ENCODE measurements at regions of chr9 and their contacts with region 1.

Region 1: DNA sequence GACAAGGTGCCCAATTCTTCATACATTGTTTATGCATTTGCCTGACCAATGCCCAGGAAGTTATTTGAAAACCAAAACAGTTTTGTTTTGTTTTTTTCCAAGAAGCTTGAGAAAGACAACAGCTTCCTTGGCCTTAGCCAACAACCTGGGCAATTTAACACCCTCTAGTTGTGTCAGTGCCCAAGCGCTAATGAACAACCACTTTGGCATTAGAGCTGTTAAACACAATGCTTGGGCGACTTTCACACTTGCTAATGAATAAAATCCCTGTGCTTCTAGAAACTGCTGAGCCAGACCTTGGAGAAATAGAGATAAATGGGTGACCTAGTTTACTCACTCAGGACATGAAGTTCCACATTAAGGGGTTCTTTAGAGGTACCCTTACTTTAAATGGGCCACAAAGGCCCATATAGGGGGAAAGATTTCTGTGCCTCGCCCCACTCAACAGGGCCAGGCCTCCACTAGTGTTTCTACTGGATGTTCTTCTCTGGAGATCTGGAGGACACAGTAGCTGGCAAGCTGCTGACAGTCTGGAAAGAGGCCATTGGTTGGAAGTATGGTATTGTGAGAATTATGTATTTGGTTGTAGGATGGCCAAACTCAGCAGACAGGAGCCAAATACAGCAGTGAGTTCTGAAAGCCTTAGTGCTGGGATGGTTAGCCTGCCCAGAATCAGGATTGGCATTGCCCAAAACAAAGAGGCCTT is 179.8 kb downstream of the DOCK8 start:
- DNase-seq: no peak
- ATAC-seq: no peak
- H3K4me3 ChIP-seq: no peak overlapping the region
- H3K4me3 Mint-ChIP-seq: no peak overlapping the region
- H3K27ac ChIP-seq: no peak overlapping the region
- H3K27ac Mint-ChIP-seq: peak overlapping the region in 8 of 9 donors; percentile 18 to 77 (median 60)
- H3K4me1 ChIP-seq: no peaks in the 10 kb centered on the region
- H3K4me1 Mint-ChIP-seq: peaks cover 0 to 7% (median 0%) of the 10 kb centered on the region in 7 donors
- H3K27me3 ChIP-seq: no peaks in the 10 kb centered on the region
- H3K27me3 Mint-ChIP-seq: no peaks in the 10 kb centered on the region

Region 2: GRCh38 chr9:362936-363335 is 31.6 kb before region 1 on chr9:
- CTCF ChIA-PET with region 1: no interaction called
- POLR2A ChIA-PET with region 1: no interaction called
- intact Hi-C with region 1: loop called in 1 of 2 experiments (anchors 5 kb)
- DNase-seq: no peak
- ATAC-seq: no peak
- H3K4me3 ChIP-seq: no peak overlapping the region
- H3K4me3 Mint-ChIP-seq: no peak overlapping the region
- H3K27ac ChIP-seq: no peak overlapping the region
- H3K27ac Mint-ChIP-seq: peak overlapping the region in 3 of 9 donors; percentile 67 to 88 (median 79)
- H3K4me1 ChIP-seq: no peaks in the 10 kb centered on the region
- H3K4me1 Mint-ChIP-seq: peaks cover 0 to 13% (median 4%) of the 10 kb centered on the region in 7 donors
- H3K27me3 ChIP-seq: no peaks in the 10 kb centered on the region
- H3K27me3 Mint-ChIP-seq: no peaks in the 10 kb centered on the region

Region 3: GRCh38 chr9:453832-454231 is 59.3 kb after region 1 on chr9:
- CTCF ChIA-PET with region 1: no interaction called
- POLR2A ChIA-PET with region 1: no interaction called
- intact Hi-C with region 1: no loop called
- DNase-seq: no peak
- ATAC-seq: no peak
- H3K4me3 ChIP-seq: no peak overlapping the region
- H3K4me3 Mint-ChIP-seq: no peak overlapping the region
- H3K27ac ChIP-seq: no peak overlapping the region
- H3K27ac Mint-ChIP-seq: peak overlapping the region in 3 of 9 donors; percentile 24 to 60 (median 43)
- H3K4me1 ChIP-seq: no peaks in the 10 kb centered on the region
- H3K4me1 Mint-ChIP-seq: peaks cover 0 to 22% (median 6%) of the 10 kb centered on the region in 7 donors
- H3K27me3 ChIP-seq: no peaks in the 10 kb centered on the region
- H3K27me3 Mint-ChIP-seq: no peaks in the 10 kb centered on the region